ENCODE measurements at regions of chr12 and their contacts with region 1.

Region 1: GRCh38 chr12:11553871-11554533 is 95.5 kb upstream of the ETV6 start:
- DNase-seq: peak; percentile 58
- H3K4me3 ChIP-seq: no peak overlapping the region
- H3K27ac ChIP-seq: no peak overlapping the region
- H3K4me1 ChIP-seq: peaks cover 7 to 32% (median 14%) of the 10 kb centered on the region in 4 donors
- H3K27me3 ChIP-seq: no peaks in the 10 kb centered on the region
- CTCF ChIP-seq: peak; percentile 50 to 69 (median 58)
- EP300 ChIP-seq: no peak
- POLR2A ChIP-seq: no peak

Region 2: GRCh38 chr12:11705010-11705409 is 151.0 kb after region 1 on chr12:
- in situ Hi-C with region 1: no loop called
- intact Hi-C with region 1: loop called (anchors 5 kb)
- DNase-seq: no peak
- H3K4me3 ChIP-seq: no peak overlapping the region
- H3K27ac ChIP-seq: peak overlapping the region; percentile 64 to 81 (median 70)
- H3K4me1 ChIP-seq: peaks cover 22 to 58% (median 38%) of the 10 kb centered on the region in 4 donors
- H3K27me3 ChIP-seq: no peaks in the 10 kb centered on the region
- CTCF ChIP-seq: no peak
- EP300 ChIP-seq: peak; percentile 53
- POLR2A ChIP-seq: no peak

Region 3: GRCh38 chr12:11795913-11796459 is 242.0 kb after region 1 on chr12:
- in situ Hi-C with region 1: no loop called
- intact Hi-C with region 1: no loop called
- DNase-seq: no peak
- H3K4me3 ChIP-seq: no peak overlapping the region
- H3K27ac ChIP-seq: peak overlapping the region; percentile 76 to 85 (median 80)
- H3K4me1 ChIP-seq: peaks cover 24 to 60% (median 44%) of the 10 kb centered on the region in 4 donors
- H3K27me3 ChIP-seq: no peaks in the 10 kb centered on the region
- CTCF ChIP-seq: no peak
- EP300 ChIP-seq: no peak
- POLR2A ChIP-seq: no peak

Region 4: GRCh38 chr12:12334367-12335040 is 780.5 kb after region 1 on chr12:
- in situ Hi-C with region 1: loop called in 2 of 4 experiments (anchors 25 kb)
- intact Hi-C with region 1: no loop called
- DNase-seq: peak; percentile 64
- H3K4me3 ChIP-seq: no peak overlapping the region
- H3K27ac ChIP-seq: peak overlapping the region; percentile 52 to 78 (median 60)
- H3K4me1 ChIP-seq: peaks cover 9 to 38% (median 27%) of the 10 kb centered on the region in 4 donors
- H3K27me3 ChIP-seq: no peaks in the 10 kb centered on the region
- CTCF ChIP-seq: peak; percentile 82 to 93 (median 86)
- EP300 ChIP-seq: no peak
- POLR2A ChIP-seq: no peak